Calu3 (cell line): ENCODE measurements at regions of chr7 and their contacts with region 1.

Region 1: GRCh38 chr7:30584965-30585364 is 9.7 kb upstream of the GARS1 start:
- DNase-seq: no peak
- H3K4me3 Mint-ChIP-seq: no peak overlapping the region
- H3K27ac Mint-ChIP-seq: no peak overlapping the region
- H3K4me1 Mint-ChIP-seq: no peaks in the 10 kb centered on the region
- H3K27me3 Mint-ChIP-seq: no peaks in the 10 kb centered on the region
- CTCF ChIP-seq: no peak

Region 2: DNA sequence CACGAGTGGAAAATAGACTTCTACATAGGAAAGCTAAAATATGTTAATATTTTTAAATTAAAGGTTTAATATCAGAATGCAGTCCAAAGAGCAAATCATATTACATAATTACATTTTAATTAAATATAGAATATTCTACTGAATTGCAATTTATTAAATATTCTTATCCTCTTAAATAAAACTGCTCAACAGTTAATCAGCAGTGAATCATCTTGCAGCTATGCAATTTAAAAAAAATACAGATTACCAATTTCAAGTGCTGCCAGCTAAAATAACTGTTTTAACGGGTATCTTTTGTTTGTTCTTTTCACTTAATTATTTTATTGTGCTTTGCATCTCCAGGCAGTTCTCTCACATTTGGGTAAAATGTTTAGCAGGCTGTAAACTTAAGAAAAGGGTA is 218.4 kb before region 1 on chr7:
- CTCF ChIA-PET with region 1: no interaction called
- intact Hi-C with region 1: loop called (anchors 5 kb)
- DNase-seq: no peak
- H3K4me3 Mint-ChIP-seq: no peak overlapping the region
- H3K27ac Mint-ChIP-seq: no peak overlapping the region
- H3K4me1 Mint-ChIP-seq: no peaks in the 10 kb centered on the region
- H3K27me3 Mint-ChIP-seq: no peaks in the 10 kb centered on the region
- CTCF ChIP-seq: no peak

Region 3: GRCh38 chr7:30717181-30717580 is 132.2 kb after region 1 on chr7:
- CTCF ChIA-PET with region 1: no interaction called
- intact Hi-C with region 1: loop called (anchors 2 kb)
- DNase-seq: no peak
- H3K4me3 Mint-ChIP-seq: no peak overlapping the region
- H3K27ac Mint-ChIP-seq: no peak overlapping the region
- H3K4me1 Mint-ChIP-seq: no peaks in the 10 kb centered on the region
- H3K27me3 Mint-ChIP-seq: peaks cover 75% of the 10 kb centered on the region
- CTCF ChIP-seq: no peak